ENCODE measurements at regions of chr2 and their contacts with region 1.

Region 1: GRCh38 chr2:28621172-28622100 is 125.6 kb downstream of the PLB1 start:
- DNase-seq: peak; percentile 81
- ATAC-seq: peak; percentile 73
- H3K4me3 Mint-ChIP-seq: peak overlapping the region; percentile 49
- H3K27ac Mint-ChIP-seq: peak overlapping the region; percentile 96
- H3K4me1 Mint-ChIP-seq: peaks cover 95% of the 10 kb centered on the region
- H3K27me3 Mint-ChIP-seq: no peaks in the 10 kb centered on the region

Region 2: GRCh38 chr2:28610583-28611201 is 10.7 kb before region 1 on chr2:
- CTCF ChIA-PET with region 1: interaction called, 9 read pairs
- POLR2A ChIA-PET with region 1: interaction called, 3 read pairs
- intact Hi-C with region 1: loop called in 1 of 2 experiments (anchors 2 kb)
- DNase-seq: peak; percentile 76
- ATAC-seq: peak; percentile 71
- H3K4me3 Mint-ChIP-seq: no peak overlapping the region
- H3K27ac Mint-ChIP-seq: peak overlapping the region; percentile 9
- H3K4me1 Mint-ChIP-seq: peaks cover 25% of the 10 kb centered on the region
- H3K27me3 Mint-ChIP-seq: no peaks in the 10 kb centered on the region

Region 3: DNA sequence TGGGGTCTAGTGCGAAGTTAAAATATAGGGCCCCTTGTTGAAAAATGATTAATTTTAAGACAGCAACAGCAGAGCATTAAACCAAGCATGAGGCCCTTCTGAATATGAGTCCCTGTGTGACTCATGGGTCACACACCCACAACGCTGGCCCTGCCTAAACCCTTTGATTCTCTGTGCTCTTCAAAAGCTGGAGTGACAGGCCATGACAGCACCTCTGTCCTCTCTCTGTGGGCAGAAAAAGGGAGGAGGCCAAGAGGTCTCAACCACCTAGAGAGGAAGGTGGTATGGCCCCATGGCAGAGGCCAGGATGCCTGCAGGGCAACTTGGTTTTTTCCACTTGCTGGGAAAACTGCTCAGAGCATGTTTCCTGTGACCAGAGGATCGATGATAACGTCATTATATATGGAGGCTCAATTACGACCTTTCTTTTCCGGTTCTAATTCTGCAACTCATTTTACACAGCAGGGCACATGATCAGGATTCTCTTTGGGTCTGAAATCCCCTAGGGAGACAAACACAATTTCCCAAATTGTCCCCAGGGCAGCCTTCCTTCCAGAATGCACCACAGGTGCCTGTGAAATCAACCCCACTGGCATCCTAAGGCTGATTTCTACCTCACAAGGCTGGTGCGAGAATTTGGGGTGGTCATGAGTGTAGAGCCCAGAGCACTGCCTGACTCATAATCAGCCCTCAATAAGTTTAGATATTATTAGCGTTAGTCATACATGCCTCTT is 28.2 kb after region 1 on chr2:
- CTCF ChIA-PET with region 1: no interaction called
- POLR2A ChIA-PET with region 1: no interaction called
- intact Hi-C with region 1: loop called in 1 of 2 experiments (anchors 2 kb)
- DNase-seq: peak; percentile 79
- ATAC-seq: peak; percentile 97
- H3K4me3 Mint-ChIP-seq: peak overlapping the region; percentile 8
- H3K27ac Mint-ChIP-seq: peak overlapping the region; percentile 83
- H3K4me1 Mint-ChIP-seq: peaks cover 28% of the 10 kb centered on the region
- H3K27me3 Mint-ChIP-seq: no peaks in the 10 kb centered on the region

Region 4: GRCh38 chr2:28681158-28681571 is 59.7 kb after region 1 on chr2:
- CTCF ChIA-PET with region 1: interaction called, 4 read pairs
- POLR2A ChIA-PET with region 1: no interaction called
- intact Hi-C with region 1: loop called (anchors 1 to 2 kb)
- DNase-seq: peak; percentile 81
- ATAC-seq: peak; percentile 91
- H3K4me3 Mint-ChIP-seq: peak overlapping the region; percentile 20
- H3K27ac Mint-ChIP-seq: peak overlapping the region; percentile 91
- H3K4me1 Mint-ChIP-seq: peaks cover 41% of the 10 kb centered on the region
- H3K27me3 Mint-ChIP-seq: no peaks in the 10 kb centered on the region